Heart right ventricle (tissue), 16 donors: ENCODE measurements at regions of chr9 and their contacts with region 1.

Region 1: GRCh38 chr9:109974143-109974917 is 194.3 kb downstream of the PALM2AKAP2 start:
- DNase-seq: peak; percentile 32 to 49
- ATAC-seq: peak in 7 of 8 donors; percentile 20 to 91 (median 70)
- H3K4me3 ChIP-seq: no peak overlapping the region
- H3K27ac ChIP-seq: peak overlapping the region in 6 of 10 donors; percentile 11 to 73 (median 40)
- H3K4me1 ChIP-seq: peaks cover 2 to 47% (median 30%) of the 10 kb centered on the region in 9 donors
- H3K27me3 ChIP-seq: no peaks in the 10 kb centered on the region
- CTCF ChIP-seq: no peak

Region 2: DNA sequence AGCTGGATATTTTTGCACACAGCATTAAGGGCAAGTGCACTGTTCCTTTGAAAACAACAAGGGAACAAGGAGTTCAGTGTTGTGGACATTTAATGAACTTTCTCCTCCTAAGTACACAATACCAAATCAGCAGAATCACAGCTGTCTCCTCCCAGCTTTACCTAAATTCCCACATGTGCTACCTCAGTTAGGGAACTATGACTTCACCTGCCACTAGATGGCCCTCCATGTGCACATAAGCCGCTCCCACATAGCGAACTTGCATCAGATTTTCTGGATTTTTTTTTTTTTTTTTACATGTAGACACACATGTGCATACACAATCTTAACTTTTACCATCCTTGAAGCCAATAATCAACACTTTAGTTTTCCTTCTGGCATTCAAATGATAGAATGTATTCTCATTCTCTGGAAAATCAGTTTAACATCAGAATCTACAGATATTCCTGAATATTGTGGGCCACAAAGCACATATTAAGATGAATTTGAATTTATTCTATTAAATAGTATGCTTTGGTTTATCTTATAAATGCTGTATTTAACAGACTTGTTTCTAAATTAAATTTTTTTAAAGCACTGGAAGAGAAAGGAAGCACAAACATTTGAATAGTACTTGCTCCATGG is 70.7 kb before region 1 on chr9:
- intact Hi-C with region 1: no loop called
- DNase-seq: peak; percentile 28 to 82
- ATAC-seq: peak in 6 of 8 donors; percentile 36 to 56 (median 40)
- H3K4me3 ChIP-seq: no peak overlapping the region
- H3K27ac ChIP-seq: peak overlapping the region in 1 of 10 donors; percentile 16
- H3K4me1 ChIP-seq: peaks cover 0 to 76% (median 35%) of the 10 kb centered on the region in 9 donors
- H3K27me3 ChIP-seq: no peaks in the 10 kb centered on the region
- CTCF ChIP-seq: peak; percentile 46 to 93 (median 84)

Region 3: GRCh38 chr9:110040788-110041187 is 66.5 kb after region 1 on chr9:
- intact Hi-C with region 1: loop called in 1 of 10 experiments (anchors 2 kb)
- DNase-seq: no peak
- ATAC-seq: peak in 5 of 8 donors; percentile 15 to 56 (median 37)
- H3K4me3 ChIP-seq: no peak overlapping the region
- H3K27ac ChIP-seq: peak overlapping the region in 9 of 10 donors; percentile 24 to 80 (median 59)
- H3K4me1 ChIP-seq: peaks cover 4 to 52% (median 43%) of the 10 kb centered on the region in 9 donors
- H3K27me3 ChIP-seq: no peaks in the 10 kb centered on the region
- CTCF ChIP-seq: no peak